Activated naive CD4-positive, alpha-beta T cell treated with anti-CD3 and anti-CD28 coated beads for 36 hours (primary cell): ENCODE measurements at regions of chr20 and their contacts with region 1.

Region 1: GRCh38 chr20:32207626-32208498 is at the starts of genes PLAGL2 and POFUT1:
- DNase-seq: peak; percentile 92
- H3K4me3 Mint-ChIP-seq: peak within 1 kb of the TSS; percentile 99
- H3K27ac Mint-ChIP-seq: peak within 1 kb of the TSS; percentile 98
- H3K4me1 Mint-ChIP-seq: peaks cover 65% of the 10 kb centered on the region
- H3K27me3 Mint-ChIP-seq: no peaks in the 10 kb centered on the region
- total RNA-seq, gene PLAGL2: 63.3 to 64.9 TPM
- total RNA-seq, gene POFUT1: 37.1 to 38.9 TPM

Region 2: GRCh38 chr20:32109392-32110172 is 98.3 kb before region 1 on chr20 and contains the start of gene TM9SF4:
- CTCF ChIA-PET with region 1: interaction called, 3 read pairs
- intact Hi-C with region 1: loop called (anchors 1 kb)
- DNase-seq: peak; percentile 94
- H3K4me3 Mint-ChIP-seq: peak within 1 kb of the TSS; percentile 91
- H3K27ac Mint-ChIP-seq: peak within 1 kb of the TSS; percentile 100
- H3K4me1 Mint-ChIP-seq: peaks cover 36% of the 10 kb centered on the region
- H3K27me3 Mint-ChIP-seq: no peaks in the 10 kb centered on the region
- total RNA-seq, gene TM9SF4: 37.9 to 39.1 TPM

Region 3: DNA sequence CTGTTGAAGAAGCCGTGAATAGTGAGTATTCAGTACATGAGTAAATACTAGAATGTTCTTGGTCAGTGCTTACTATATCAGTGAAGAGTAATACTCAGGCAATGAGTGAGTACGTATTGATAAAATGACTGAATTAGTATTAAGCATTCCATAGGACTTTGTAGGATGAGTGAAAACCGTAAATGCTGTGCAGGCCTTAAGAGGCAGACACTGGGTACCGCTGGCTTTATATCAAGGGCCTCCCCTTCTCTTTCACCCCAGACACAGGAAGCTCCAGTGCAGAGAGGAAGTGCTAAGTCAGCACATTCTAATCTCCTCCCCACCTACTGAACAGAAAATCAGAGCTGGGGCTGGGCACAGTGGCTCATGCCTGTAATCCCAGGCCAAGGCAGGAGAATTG is 24.0 kb after region 1 on chr20:
- CTCF ChIA-PET with region 1: interaction called, 3 read pairs
- intact Hi-C with region 1: loop called (anchors 1 kb)
- DNase-seq: peak; percentile 75
- H3K4me3 Mint-ChIP-seq: peak overlapping the region; percentile 47
- H3K27ac Mint-ChIP-seq: peak overlapping the region; percentile 99
- H3K4me1 Mint-ChIP-seq: peaks cover 39% of the 10 kb centered on the region
- H3K27me3 Mint-ChIP-seq: no peaks in the 10 kb centered on the region

Region 4: DNA sequence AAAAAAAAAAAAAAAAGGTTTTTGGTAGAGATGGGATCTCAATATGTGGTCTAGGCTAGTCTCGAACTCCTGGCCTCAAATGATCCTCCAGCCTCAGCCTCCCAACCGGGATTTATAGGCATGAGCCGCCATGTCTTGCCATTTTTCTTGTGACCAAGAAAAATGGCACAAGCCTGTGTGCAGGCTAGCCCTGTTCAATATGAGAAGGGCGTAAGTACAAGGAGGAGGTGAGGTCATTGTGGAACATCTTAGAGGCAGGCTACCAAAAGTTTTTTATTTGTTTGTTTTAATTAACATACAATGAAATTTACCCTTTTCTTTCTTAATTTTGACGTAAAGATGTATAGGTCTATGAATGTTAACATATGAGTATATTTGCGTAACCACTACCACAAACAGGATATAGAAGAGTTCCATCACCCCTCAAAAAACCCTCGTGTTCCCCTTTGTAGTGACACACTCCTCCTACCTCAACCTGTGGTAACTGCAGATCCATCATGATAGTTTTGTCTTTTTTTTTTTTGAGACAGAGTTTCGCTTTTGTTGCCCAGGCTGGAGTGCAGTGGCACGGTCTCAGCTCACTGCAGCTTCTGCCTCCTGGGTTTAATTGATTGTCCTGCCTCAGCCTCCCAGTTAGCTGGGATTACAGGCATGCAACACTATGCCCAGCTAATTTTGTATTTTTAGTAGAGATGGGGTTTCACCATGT is 41.3 kb after region 1 on chr20:
- CTCF ChIA-PET with region 1: no interaction called
- intact Hi-C with region 1: loop called (anchors 1 kb)
- DNase-seq: peak; percentile 61
- H3K4me3 Mint-ChIP-seq: peak overlapping the region; percentile 45
- H3K27ac Mint-ChIP-seq: peak overlapping the region; percentile 96
- H3K4me1 Mint-ChIP-seq: peaks cover 54% of the 10 kb centered on the region
- H3K27me3 Mint-ChIP-seq: no peaks in the 10 kb centered on the region

Region 5: DNA sequence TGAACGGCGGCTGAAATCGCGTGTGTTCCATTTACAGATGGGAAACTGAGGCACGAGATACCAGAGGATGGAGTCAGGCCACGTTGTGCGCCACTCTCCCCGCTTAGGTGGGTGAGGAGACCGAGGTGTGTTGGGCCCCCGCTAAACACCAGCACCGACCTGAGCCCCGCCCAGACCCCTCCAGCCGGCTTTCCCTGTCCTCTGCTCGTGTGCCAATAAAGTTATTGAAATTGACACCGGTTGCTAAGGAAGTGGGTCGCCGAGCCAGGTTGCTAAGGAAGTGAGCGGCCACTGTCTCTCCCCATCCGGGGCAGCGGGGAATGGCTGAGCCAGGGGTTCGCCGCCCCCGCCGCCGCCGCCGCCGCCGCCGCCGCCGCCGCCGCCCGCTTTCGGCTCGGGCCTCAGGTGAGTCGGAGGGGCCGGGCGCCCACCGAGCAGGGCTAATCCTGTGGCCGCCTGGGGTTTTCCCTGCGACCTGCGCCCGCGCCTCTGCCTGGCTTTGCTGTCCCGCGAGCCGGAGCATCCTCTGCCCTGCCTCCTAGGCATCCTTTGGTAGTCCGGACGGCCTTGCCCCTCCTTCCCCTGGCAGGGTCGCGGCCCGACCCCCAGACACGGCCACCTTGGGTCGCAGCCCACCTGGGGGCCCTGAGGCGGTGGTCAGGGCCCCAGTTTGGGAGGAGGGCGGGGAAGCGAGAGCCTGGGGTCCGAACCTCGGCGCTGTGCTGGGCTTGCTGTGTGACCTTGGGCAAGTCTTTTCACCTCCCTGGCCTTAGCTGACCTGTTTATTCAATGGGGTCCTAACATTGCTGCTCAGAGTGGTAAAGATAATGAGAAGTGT is 69.7 kb after region 1 on chr20 and contains the start of gene KIF3B:
- CTCF ChIA-PET with region 1: no interaction called
- intact Hi-C with region 1: loop called (anchors 1 kb)
- DNase-seq: peak; percentile 91
- H3K4me3 Mint-ChIP-seq: peak within 1 kb of the TSS; percentile 89
- H3K27ac Mint-ChIP-seq: peak within 1 kb of the TSS; percentile 89
- H3K4me1 Mint-ChIP-seq: peaks cover 43% of the 10 kb centered on the region
- H3K27me3 Mint-ChIP-seq: no peaks in the 10 kb centered on the region
- total RNA-seq, gene KIF3B: 27.4 to 27.6 TPM

Region 6: DNA sequence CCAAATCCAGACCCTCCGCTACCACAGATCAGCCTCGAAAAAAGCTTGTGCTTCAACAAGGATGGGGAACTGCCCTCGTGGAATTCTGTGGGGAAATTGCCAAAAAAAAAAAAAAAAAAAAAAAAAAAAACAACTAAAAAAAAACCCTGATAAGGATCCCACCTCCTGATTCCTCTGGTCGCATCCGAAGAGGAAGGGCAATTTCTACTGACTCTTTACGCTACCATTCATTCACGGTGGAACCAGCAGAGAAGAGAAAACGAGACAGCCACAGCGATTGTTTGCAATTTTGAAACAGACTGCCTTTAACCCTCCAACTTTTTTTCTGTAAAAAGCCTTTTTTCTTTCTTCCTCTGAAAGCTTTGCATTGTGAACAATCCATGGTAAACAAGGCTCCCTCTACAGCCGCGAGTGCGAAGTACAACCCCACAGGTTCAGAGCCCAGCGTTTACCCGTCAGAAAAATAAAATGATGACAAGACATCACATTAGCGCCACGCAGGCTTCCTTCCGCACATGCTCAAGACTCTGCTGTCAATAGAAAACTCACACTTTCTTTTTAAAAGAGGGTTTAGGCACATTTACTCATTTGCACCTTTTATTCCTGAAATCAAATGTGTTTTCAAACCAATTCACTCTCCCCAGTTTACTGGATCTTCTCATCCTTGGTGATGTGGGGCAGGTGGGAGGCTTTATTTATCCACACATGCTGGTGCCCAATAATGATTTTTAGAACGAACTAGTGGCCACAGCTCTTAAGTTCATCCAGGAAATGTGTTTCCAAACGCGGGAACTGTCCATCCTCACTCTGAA is 277.3 kb after region 1 on chr20:
- CTCF ChIA-PET with region 1: no interaction called
- intact Hi-C with region 1: loop called (anchors 1 kb)
- DNase-seq: peak; percentile 95
- H3K4me3 Mint-ChIP-seq: peak overlapping the region; percentile 84
- H3K27ac Mint-ChIP-seq: peak overlapping the region; percentile 93
- H3K4me1 Mint-ChIP-seq: peaks cover 39% of the 10 kb centered on the region
- H3K27me3 Mint-ChIP-seq: no peaks in the 10 kb centered on the region

Region 7: GRCh38 chr20:32509639-32510066 is 301.8 kb after region 1 on chr20:
- CTCF ChIA-PET with region 1: no interaction called
- intact Hi-C with region 1: loop called (anchors 5 kb)
- DNase-seq: peak; percentile 82
- H3K4me3 Mint-ChIP-seq: peak overlapping the region; percentile 71
- H3K27ac Mint-ChIP-seq: peak overlapping the region; percentile 90
- H3K4me1 Mint-ChIP-seq: peaks cover 90% of the 10 kb centered on the region
- H3K27me3 Mint-ChIP-seq: no peaks in the 10 kb centered on the region